Psoas muscle (tissue), 8 donors: ENCODE measurements at regions of chr10 and their contacts with region 1.

Region 1: GRCh38 chr10:99395750-99396445 is 34.5 kb downstream of the GOT1 start:
- DNase-seq: no peak
- ATAC-seq: peak in 2 of 4 donors; percentile 39 to 70
- H3K4me3 ChIP-seq: no peak overlapping the region
- H3K27ac ChIP-seq: peak overlapping the region; percentile 84
- H3K4me1 ChIP-seq: peaks cover 15% of the 10 kb centered on the region
- H3K27me3 ChIP-seq: no peaks in the 10 kb centered on the region
- CTCF ChIP-seq: no peak

Region 2: DNA sequence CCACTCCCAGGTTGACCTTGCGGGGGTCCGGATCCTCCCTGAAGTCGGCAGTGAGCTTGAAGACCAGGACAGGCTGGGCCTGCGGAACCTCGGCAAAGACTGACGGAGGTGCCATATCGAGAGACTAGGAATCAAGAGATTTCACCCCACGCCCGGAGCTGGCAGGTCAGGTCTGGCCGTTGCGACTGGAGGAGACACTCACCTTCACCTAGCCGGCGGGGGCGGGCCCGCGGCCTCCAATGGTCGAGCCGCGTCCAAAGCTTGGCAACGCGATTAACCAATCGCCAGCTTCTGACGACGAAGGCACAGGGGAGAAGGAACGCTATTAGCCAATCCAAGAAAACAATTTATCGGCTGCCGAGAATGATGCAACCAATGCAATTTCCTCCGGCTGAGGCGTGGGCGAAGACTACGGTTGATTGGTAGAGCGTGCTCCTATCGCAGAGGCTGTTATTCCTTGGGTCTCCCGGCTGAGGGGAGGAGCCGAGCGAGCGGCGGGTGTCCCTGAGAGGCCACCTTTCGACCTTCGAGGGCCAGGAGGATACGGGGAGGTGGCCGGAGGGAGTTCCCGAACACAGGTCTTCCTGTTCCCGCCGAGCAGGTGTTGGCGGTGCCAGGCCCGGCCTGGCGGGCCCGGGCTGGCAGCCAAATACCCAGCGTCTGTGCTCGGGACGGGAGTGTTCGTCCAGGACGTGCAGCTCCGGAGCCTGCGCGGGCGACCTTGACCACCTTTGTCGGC is 34.7 kb after region 1 on chr10 and contains the start of gene GOT1:
- intact Hi-C with region 1: loop called (anchors 2 to 5 kb)
- DNase-seq: peak; percentile 92 to 97
- ATAC-seq: peak; percentile 95 to 98 (median 97)
- H3K4me3 ChIP-seq: peak within 1 kb of the TSS; percentile 94
- H3K27ac ChIP-seq: peak within 1 kb of the TSS; percentile 85
- H3K4me1 ChIP-seq: peaks cover 62% of the 10 kb centered on the region
- H3K27me3 ChIP-seq: no peaks in the 10 kb centered on the region
- CTCF ChIP-seq: no peak
- total RNA-seq, gene GOT1: 98.9 to 381 (median 223) TPM

Region 3: DNA sequence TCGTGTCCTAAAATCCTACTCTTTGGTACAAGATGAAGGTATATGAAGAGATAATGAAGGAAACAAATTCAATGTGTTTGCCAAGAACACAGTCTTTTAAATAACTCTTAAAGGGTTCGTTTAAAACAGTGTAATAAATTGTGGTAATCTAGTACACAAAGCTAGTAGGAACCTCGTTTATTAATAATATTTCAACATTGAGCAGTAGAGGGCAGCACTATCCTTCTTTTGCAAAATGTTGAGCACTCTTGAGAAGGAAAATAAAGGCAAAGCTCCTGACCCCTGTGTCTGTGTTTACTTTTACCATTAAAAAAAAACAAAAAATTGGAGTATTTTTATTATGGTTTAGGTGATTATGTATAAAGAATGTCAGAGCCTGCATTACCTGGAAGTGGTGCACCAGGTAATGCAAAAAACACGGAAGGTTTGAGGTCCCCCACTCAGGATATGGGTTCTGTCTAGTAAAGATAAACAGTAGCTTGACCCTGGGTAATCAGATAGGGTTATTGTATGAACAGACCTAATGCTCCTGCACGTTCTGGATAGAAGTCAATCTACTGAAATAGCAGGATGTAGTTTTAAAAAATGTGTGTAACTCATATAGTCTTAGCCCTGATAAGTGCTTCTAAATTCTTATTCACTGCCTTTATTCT is 40.2 kb after region 1 on chr10:
- intact Hi-C with region 1: loop called (anchors 2 to 5 kb)
- DNase-seq: no peak
- ATAC-seq: peak; percentile 53 to 63 (median 54)
- H3K4me3 ChIP-seq: no peak overlapping the region
- H3K27ac ChIP-seq: peak overlapping the region; percentile 27
- H3K4me1 ChIP-seq: peaks cover 52% of the 10 kb centered on the region
- H3K27me3 ChIP-seq: no peaks in the 10 kb centered on the region
- CTCF ChIP-seq: peak; percentile 60

Region 4: GRCh38 chr10:99548041-99548530 is 152.2 kb after region 1 on chr10:
- intact Hi-C with region 1: loop called in 1 of 2 experiments (anchors 10 kb)
- DNase-seq: no peak
- ATAC-seq: peak in 2 of 4 donors; percentile 45 to 48
- H3K4me3 ChIP-seq: no peak overlapping the region
- H3K27ac ChIP-seq: no peak overlapping the region
- H3K4me1 ChIP-seq: peaks cover 11% of the 10 kb centered on the region
- H3K27me3 ChIP-seq: peaks cover 3 to 78% (median 6%) of the 10 kb centered on the region in 3 donors
- CTCF ChIP-seq: peak; percentile 23

Region 5: GRCh38 chr10:99560277-99561126 is 164.6 kb after region 1 on chr10:
- intact Hi-C with region 1: no loop called
- DNase-seq: no peak
- ATAC-seq: peak; percentile 57 to 89 (median 74)
- H3K4me3 ChIP-seq: no peak overlapping the region
- H3K27ac ChIP-seq: no peak overlapping the region
- H3K4me1 ChIP-seq: no peaks in the 10 kb centered on the region
- H3K27me3 ChIP-seq: peaks cover 0 to 20% (median 0%) of the 10 kb centered on the region in 3 donors
- CTCF ChIP-seq: peak; percentile 78

Region 6: GRCh38 chr10:99612167-99612831 is 216.4 kb after region 1 on chr10:
- intact Hi-C with region 1: loop called (anchors 2 to 5 kb)
- DNase-seq: no peak
- ATAC-seq: peak; percentile 60 to 83 (median 70)
- H3K4me3 ChIP-seq: no peak overlapping the region
- H3K27ac ChIP-seq: no peak overlapping the region
- H3K4me1 ChIP-seq: peaks cover 13% of the 10 kb centered on the region
- H3K27me3 ChIP-seq: no peaks in the 10 kb centered on the region
- CTCF ChIP-seq: peak; percentile 84